Posterior cingulate gyrus (tissue), 11 donors: ENCODE measurements at regions of chr1 and their contacts with region 1.

Region 1: DNA sequence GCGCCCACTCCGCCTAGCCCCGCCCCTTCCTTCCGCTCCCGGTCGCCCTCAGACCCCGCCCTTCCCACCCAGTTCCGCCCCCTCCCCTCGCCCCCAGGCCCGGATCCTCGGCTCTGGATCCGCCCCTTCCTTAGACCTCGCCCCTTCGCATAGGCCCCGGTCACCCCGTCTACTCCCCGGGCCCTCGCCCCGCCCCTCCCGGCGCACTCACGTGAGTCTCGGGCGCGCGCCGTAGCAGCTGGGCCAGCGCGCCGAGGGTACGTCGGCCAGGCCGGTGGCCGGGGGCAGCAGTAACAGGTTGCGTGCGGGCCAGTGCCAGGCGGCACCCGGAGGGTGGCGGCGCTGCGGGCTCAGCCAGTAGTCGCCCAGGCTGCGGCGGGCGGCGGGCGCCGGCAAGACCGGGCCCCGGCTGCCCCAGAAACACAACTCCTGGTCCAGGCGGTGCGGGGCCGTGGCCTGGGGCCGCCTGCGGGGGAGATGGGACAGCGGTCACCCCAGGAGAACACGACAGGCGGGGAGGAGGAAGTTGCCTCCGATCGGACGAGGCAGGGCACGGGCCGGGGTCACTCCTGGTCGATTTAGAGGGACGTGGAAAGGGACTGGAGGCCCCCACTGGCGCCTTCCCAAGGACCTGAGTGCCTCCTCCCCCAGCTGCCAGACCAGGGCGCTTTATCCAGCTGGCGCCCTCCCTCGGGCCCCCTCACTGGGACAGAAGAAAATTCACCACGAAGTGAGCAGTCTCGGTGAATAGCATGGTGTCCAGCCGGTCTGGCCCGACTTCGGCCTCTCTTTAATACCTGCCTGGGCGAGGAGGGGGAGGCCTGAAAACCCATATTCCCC is 10.7 kb downstream of the FAM229A start:
- DNase-seq: peak; percentile 83 to 99 (median 87)

Region 2: GRCh38 chr1:32186077-32186476 is 165.5 kb before region 1 on chr1:
- intact Hi-C with region 1: no loop called
- DNase-seq: no peak

Region 3: DNA sequence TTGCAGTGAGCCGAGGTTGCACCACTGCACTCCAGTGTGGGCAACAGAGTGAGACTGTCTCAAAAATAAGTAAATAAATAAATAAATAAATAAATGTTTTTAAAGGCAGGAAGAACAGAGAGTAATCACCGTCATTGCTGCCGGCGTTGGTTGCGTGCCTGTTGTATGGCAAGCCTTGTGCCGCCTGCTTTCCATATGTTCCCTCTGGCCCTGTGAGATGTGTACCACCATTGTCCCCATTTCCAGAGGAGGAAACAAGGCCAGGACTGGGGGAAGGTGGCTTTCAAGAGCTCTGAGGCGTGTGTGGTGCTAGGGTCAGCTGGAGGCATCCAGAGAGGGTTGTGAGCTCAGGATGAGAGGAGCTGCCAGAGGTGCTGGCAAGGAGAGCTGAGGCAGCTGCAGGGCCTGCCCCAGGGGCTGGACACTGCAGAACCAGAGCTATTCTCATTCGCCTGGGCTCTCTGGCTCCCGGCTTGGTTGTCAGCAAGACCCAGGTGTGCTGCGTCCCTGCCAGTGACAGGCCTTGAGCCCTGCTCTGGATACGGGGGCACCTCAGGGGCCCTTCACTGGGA is 10.3 kb before region 1 on chr1:
- intact Hi-C with region 1: loop called (anchors 1 kb)
- DNase-seq: peak in 4 of 10 donors; percentile 36 to 89 (median 58)